Right cardiac atrium (tissue), 5 donors: ENCODE measurements at regions of chr7 and their contacts with region 1.

Region 1: DNA sequence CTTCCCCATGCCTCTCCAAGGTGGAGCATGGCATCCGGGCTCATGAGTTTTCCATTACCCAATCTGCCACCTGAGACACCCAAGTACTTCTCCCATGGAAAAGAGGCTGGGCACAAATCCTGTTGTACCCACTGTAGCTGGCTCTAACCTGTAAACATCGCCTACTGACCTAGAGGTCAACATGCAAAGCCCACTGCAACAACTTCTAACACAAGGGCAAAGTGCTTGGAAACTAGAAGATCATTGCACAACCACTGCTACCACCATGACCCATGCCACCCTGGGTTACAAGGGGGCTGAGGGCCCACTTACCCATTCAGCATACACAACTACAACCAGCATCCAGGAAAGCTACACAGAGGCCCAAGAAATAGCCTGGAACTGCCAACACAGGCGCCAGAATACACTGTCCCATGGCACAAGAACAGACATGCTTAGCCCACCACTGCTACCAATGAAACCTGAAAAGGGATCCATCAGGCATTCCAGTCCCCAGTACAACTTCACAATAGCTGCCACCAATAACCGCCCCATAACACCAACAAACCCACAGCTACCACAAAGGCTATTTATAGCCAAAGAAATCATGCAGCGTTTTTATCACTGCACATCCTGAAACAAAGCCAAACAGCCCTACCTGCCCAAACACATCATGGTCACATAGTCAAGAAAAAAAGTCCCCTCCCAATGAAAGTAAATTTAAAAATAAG is 63.4 kb downstream of the RNF32 start:
- DNase-seq: no peak
- ATAC-seq: no peak
- H3K4me3 ChIP-seq: no peak overlapping the region
- H3K27ac ChIP-seq: no peak overlapping the region
- H3K4me1 ChIP-seq: peaks cover 4% of the 10 kb centered on the region
- H3K27me3 ChIP-seq: no peaks in the 10 kb centered on the region

Region 2: DNA sequence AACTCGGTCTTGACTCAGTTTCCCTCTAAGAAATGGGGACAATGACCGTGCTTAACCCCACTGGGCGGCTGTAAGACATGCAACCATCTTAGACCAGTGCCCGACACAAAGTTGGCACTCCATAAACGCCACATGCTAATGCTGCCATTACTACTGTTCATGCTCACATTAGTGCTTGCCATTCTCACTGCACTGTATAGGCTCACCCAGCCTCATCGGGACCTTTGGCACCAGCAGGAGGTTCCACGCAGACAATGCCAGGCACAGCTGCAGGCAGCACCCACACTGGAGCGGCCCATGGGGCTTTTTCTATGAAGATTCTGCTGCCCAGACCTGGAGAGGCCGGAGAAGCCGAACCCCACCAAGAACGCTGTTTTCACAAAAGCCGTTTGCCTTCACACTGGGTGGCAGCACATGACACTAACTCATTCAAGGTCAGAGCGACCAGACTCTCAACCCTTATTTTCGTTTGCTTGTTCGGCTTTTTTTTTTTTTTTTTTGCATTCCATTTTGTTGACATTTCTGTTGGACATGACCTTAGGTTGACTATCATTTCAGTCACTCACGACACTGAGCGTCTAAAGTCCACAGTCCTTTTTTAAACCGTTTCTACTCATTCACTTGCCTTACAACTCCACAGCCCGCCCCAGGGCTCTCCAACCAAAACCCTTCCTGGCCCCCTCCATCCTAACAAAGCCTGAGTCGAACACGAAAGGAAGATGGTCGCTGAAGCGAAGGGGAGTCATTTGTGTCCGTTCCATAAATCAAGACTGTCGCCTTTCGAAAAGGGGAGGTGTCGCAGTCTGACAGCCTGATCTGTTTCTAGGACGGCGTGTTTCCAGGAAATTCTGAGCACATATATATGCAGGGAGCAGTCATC is 187.8 kb before region 1 on chr7:
- intact Hi-C with region 1: no loop called
- DNase-seq: no peak
- ATAC-seq: no peak
- H3K4me3 ChIP-seq: no peak overlapping the region
- H3K27ac ChIP-seq: no peak overlapping the region
- H3K4me1 ChIP-seq: no peaks in the 10 kb centered on the region
- H3K27me3 ChIP-seq: no peaks in the 10 kb centered on the region

Region 3: DNA sequence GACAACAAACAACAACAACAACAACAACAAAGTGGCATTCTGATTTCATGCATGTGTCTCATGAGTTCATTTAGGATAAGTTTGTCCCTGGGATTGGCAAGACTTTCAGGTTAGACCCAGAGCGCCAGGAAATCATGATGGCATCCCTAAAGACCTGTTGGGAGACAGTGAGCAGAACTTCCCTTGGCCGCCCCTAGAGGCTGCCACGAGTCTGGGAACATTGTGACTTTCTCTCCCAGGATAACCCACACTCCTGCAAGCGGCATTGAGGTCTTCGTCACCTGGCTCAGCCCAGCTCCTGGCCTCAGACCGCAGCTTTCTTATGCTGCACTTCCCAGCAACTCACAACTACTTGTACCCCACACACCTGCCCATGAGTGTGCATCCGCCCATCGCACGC is 143.9 kb before region 1 on chr7:
- intact Hi-C with region 1: no loop called
- DNase-seq: no peak
- ATAC-seq: no peak
- H3K4me3 ChIP-seq: no peak overlapping the region
- H3K27ac ChIP-seq: no peak overlapping the region
- H3K4me1 ChIP-seq: no peaks in the 10 kb centered on the region
- H3K27me3 ChIP-seq: no peaks in the 10 kb centered on the region

Region 4: DNA sequence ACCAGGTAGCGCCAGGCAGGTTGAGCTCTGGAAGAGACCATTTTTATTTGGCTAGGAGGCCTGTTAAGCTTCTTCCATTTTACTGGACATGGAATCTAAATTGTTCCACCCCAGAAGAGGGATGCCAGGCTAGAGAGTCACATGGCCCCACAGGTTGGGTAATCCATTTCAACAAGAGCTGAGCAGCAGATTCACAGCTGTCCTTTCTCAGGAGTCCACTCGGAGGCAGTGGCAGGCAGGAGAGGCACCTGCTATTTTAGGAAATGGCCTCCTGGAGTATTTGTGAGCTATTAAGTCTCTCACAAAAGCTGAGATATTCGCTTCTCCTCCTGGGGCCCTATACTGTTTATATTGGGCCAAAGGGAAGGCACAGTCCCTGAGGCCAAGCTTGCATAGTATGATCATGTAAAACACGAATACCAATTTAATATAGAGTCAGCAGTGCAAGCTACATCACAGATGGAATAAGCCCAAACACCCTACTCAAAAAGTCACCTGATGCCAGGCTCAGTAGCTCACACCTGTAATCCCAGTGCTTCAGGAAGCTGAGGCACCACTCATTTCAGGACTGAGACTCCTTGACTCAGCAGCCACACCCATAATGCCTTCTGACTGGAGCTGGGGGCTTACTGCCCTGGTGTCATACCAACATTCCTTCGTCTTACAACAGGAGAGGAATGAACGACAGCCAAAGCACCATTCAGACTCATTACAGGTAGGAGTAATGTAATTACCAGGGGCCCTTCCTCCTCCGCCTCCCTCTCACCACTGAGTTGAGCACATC is 64.9 kb after region 1 on chr7:
- intact Hi-C with region 1: loop called in 1 of 4 experiments (anchors 5 kb)
- DNase-seq: no peak
- ATAC-seq: no peak
- H3K4me3 ChIP-seq: no peak overlapping the region
- H3K27ac ChIP-seq: no peak overlapping the region
- H3K4me1 ChIP-seq: peaks cover 2% of the 10 kb centered on the region
- H3K27me3 ChIP-seq: no peaks in the 10 kb centered on the region